Activated CD8-positive, alpha-beta T cell treated with anti-CD3 and anti-CD28 coated beads, Interleukin-2, amount 10 ng/mL, durations not matched to agents 7 days and 5 days (primary cell): ENCODE measurements at regions of chr5 and their contacts with region 1.

Region 1: DNA sequence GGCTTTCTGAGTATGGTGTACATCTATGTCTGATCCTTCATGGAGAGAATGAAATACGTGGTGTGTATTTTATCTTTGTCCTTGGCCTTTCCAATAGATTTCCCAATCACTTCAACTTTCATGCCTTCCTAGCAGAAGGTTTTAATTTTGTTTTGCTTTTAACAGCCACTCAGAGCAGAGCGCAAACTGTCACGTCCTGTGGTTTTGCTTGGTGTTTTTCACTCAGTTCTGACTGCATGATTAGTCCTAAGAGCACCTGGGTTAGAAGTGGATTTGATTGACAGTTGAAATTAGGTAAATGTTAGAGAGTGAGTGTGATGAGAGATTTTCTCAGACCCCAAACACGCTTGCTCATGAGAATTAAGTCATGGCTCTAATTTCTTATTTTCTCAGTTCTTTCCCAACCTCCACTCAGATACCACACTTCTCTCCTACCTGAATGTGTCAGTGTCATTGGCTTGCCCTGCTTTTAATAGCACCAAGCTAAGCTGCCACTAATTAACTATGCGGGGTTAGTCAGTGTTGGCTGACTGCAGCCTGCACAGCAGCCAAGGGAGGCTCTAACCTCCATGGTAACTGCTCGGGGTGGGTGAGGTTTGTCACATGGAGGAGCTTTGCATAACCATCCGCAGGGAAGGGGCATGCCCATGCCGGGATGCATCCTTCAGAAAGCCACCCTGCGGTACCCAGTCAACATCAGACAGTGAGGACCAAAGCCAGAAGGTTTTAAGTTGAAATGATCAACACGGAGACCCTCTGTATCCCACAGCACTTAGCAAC is 173.4 kb downstream of the NR3C1 start:
- DNase-seq: peak; percentile 75
- ATAC-seq: peak; percentile 88
- H3K4me3 Mint-ChIP-seq: peak overlapping the region; percentile 64
- H3K27ac Mint-ChIP-seq: peak overlapping the region; percentile 93
- H3K4me1 Mint-ChIP-seq: peaks cover 27% of the 10 kb centered on the region
- H3K27me3 Mint-ChIP-seq: no peaks in the 10 kb centered on the region

Region 2: GRCh38 chr5:142587354-142587965 is 642.6 kb before region 1 on chr5:
- CTCF ChIA-PET with region 1: no interaction called
- POLR2A ChIA-PET with region 1: no interaction called
- DNase-seq: peak; percentile 67
- ATAC-seq: no peak
- H3K4me3 Mint-ChIP-seq: no peak overlapping the region
- H3K27ac Mint-ChIP-seq: no peak overlapping the region
- H3K4me1 Mint-ChIP-seq: no peaks in the 10 kb centered on the region
- H3K27me3 Mint-ChIP-seq: peaks cover 36% of the 10 kb centered on the region

Region 3: GRCh38 chr5:143217065-143217803 is 12.9 kb before region 1 on chr5:
- CTCF ChIA-PET with region 1: interaction called, 19 read pairs
- POLR2A ChIA-PET with region 1: interaction called, 5 read pairs
- DNase-seq: no peak
- ATAC-seq: no peak
- H3K4me3 Mint-ChIP-seq: no peak overlapping the region
- H3K27ac Mint-ChIP-seq: no peak overlapping the region
- H3K4me1 Mint-ChIP-seq: peaks cover 17% of the 10 kb centered on the region
- H3K27me3 Mint-ChIP-seq: no peaks in the 10 kb centered on the region

Region 4: DNA sequence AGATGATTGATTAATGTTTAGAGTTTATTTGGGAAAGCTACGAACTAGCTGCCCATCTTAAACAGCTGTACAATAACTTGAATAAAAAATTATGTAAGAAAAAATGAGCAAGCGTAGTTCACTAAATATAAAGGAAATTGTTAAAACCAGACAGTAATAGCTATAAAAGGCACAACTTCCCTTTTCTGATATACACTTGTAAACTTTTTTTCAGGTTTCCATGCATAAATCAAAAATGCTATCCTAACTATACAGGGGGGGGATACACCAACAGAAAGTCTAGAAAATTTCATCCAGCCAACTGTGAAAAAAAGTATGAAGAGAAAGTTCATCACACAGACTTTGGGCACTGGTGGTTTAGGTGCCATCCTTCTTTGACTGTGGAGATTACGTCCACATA is 51.1 kb after region 1 on chr5:
- CTCF ChIA-PET with region 1: no interaction called
- POLR2A ChIA-PET with region 1: no interaction called
- DNase-seq: no peak
- ATAC-seq: no peak
- H3K4me3 Mint-ChIP-seq: no peak overlapping the region
- H3K27ac Mint-ChIP-seq: no peak overlapping the region
- H3K4me1 Mint-ChIP-seq: peaks cover 1% of the 10 kb centered on the region
- H3K27me3 Mint-ChIP-seq: no peaks in the 10 kb centered on the region